Heart right ventricle (tissue), 16 donors: ENCODE measurements at regions of chr11 and their contacts with region 1.

Region 1: DNA sequence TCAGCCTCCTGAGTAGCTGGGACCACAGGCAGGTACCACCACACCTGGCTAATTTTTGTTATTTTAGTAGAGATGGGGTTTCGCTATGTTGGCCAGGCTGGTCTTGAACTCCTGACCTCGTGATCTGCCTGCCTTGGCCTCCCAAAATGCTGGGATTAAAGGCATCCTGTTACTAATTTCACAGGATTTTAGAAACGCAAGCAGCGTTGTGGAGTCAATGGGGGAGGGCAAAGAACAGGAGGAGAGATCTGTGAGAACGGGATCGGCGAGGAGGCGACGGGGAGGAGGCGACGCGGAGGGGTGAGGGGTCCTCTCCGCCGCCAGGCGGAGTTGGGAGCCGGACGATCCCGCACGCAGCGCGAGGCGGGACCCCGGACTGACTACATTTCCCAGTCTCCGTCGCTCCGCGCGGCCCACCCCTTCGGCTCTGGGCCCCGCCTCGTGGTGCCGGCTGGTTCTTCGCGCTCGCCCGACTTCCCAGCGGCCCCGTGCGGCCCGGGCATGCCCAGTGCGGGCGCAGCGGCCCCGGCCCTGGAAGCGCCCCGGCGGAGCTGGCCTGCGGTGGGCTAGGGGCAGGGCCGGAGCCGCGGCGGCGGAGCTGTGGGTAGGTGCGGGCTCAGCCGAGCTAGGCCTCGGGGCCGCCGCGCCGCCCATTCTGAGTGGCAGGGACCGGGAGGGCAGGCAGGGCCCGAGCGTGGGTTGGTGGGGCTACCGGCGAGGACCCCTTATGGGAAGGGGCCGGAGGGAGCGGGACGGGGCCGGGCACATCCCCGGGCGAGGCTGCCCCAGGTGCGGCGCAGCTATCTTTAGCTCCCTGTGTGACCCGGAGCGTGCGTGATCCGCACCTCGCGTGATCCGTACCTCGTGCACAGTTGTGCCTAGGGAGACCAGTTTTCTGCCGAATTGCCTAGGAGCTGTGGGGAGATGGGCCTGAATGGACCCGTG is at the start of gene EI24:
- DNase-seq: peak; percentile 93
- ATAC-seq: peak; percentile 99 to 100 (median 100)
- H3K4me3 ChIP-seq: peak within 1 kb of the TSS; percentile 83 to 98 (median 89)
- H3K27ac ChIP-seq: peak within 1 kb of the TSS in 9 of 10 donors; percentile 78 to 96 (median 91)
- H3K4me1 ChIP-seq: peaks cover 0 to 23% (median 11%) of the 10 kb centered on the region in 9 donors
- H3K27me3 ChIP-seq: no peaks in the 10 kb centered on the region
- CTCF ChIP-seq: peak; percentile 57 to 87 (median 78)
- total RNA-seq, gene EI24: 43.3 to 73.7 (median 51.5) TPM

Region 2: GRCh38 chr11:125464270-125464662 is 105.0 kb before region 1 on chr11:
- intact Hi-C with region 1: loop called in 1 of 10 experiments (anchors 10 kb)
- DNase-seq: no peak
- ATAC-seq: no peak
- H3K4me3 ChIP-seq: no peak overlapping the region
- H3K27ac ChIP-seq: no peak overlapping the region
- H3K4me1 ChIP-seq: no peaks in the 10 kb centered on the region
- H3K27me3 ChIP-seq: no peaks in the 10 kb centered on the region
- CTCF ChIP-seq: no peak

Region 3: GRCh38 chr11:125542709-125543108 is 26.5 kb before region 1 on chr11:
- intact Hi-C with region 1: no loop called
- DNase-seq: no peak
- ATAC-seq: no peak
- H3K4me3 ChIP-seq: no peak overlapping the region
- H3K27ac ChIP-seq: no peak overlapping the region
- H3K4me1 ChIP-seq: no peaks in the 10 kb centered on the region
- H3K27me3 ChIP-seq: no peaks in the 10 kb centered on the region
- CTCF ChIP-seq: no peak

Region 4: GRCh38 chr11:125592305-125593112 is 23.3 kb after region 1 on chr11 and contains the start of gene STT3A:
- intact Hi-C with region 1: loop called in 2 of 10 experiments (anchors 1 to 2 kb)
- DNase-seq: peak; percentile 99 to 100
- ATAC-seq: peak; percentile 98 to 100 (median 99)
- H3K4me3 ChIP-seq: peak within 1 kb of the TSS; percentile 65 to 82 (median 72)
- H3K27ac ChIP-seq: peak within 1 kb of the TSS; percentile 83 to 97 (median 94)
- H3K4me1 ChIP-seq: peaks cover 4 to 38% (median 31%) of the 10 kb centered on the region in 9 donors
- H3K27me3 ChIP-seq: no peaks in the 10 kb centered on the region
- CTCF ChIP-seq: no peak
- total RNA-seq, gene STT3A: 52.1 to 83.9 (median 58.5) TPM

Region 5: GRCh38 chr11:125605417-125605816 is 36.2 kb after region 1 on chr11:
- intact Hi-C with region 1: loop called in 1 of 10 experiments (anchors 5 kb)
- DNase-seq: no peak
- ATAC-seq: no peak
- H3K4me3 ChIP-seq: no peak overlapping the region
- H3K27ac ChIP-seq: no peak overlapping the region
- H3K4me1 ChIP-seq: peaks cover 0 to 5% (median 0%) of the 10 kb centered on the region in 9 donors
- H3K27me3 ChIP-seq: no peaks in the 10 kb centered on the region
- CTCF ChIP-seq: no peak

Region 6: GRCh38 chr11:125874556-125875124 is 305.4 kb after region 1 on chr11:
- intact Hi-C with region 1: loop called in 1 of 10 experiments (anchors 10 kb)
- DNase-seq: peak in 1 of 2 donors; percentile 67
- ATAC-seq: peak; percentile 67 to 95 (median 92)
- H3K4me3 ChIP-seq: peak overlapping the region in 6 of 10 donors; percentile 12 to 42 (median 22)
- H3K27ac ChIP-seq: no peak overlapping the region
- H3K4me1 ChIP-seq: peaks cover 0 to 4% (median 0%) of the 10 kb centered on the region in 9 donors
- H3K27me3 ChIP-seq: no peaks in the 10 kb centered on the region
- CTCF ChIP-seq: peak; percentile 51 to 85 (median 75)